Ovary (tissue), 10 donors: ENCODE measurements at regions of chr15 and their contacts with region 1.

Region 1: DNA sequence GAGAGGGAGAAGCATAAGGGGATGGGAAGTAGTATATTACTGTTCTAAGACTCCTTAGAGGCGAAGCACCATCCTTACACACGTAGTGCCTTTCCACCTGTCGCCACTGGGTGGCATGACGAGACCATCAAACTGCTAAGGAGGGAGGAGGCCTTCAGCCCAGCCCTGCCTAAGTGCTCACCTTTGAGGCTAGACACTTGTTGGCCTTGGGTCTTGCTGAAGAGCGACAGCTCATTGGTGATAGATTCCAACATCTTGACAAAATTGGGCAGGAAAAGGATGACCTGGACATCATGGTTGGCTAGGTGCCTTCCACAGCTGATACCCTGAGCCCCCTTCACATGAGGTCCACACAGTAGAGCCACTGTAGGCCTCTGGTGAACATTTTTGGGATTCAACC is 19.6 kb downstream of the CLK3 start:
- DNase-seq: peak in 3 of 5 donors; percentile 59 to 71 (median 61)
- H3K4me3 ChIP-seq: no peak overlapping the region
- H3K27ac ChIP-seq: no peak overlapping the region
- H3K4me1 ChIP-seq: no peaks in the 10 kb centered on the region
- H3K27me3 ChIP-seq: no peaks in the 10 kb centered on the region
- CTCF ChIP-seq: peak; percentile 26 to 75 (median 72)
- EP300 ChIP-seq: no peak
- POLR2A ChIP-seq: no peak

Region 2: DNA sequence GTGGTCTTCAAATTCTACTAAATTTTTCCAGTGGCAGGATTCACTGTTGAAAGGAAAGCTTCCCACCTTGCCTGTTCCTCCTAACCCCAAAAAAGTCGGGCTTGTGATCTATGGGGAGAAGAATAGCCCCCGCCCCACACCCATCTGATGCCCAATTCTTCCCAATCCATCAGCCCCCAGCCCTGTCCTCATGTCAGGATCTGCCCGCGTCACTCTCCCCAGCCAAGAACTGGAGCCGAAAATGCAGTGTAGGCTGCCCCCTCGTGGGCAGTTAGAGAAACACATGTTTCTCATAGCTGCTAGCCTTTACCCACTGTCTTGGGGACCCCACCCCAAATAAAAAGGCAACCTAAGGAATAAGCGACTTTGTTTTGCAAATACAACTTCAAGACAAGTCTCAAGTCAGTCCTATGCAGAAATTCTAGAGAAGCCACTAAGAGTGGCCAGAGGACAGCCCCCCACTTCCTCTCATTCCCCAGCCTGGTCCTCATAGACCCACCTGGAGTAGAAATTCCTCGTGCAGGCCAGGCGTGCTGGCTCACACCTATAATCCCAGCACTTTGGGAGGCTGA is 133.6 kb after region 1 on chr15:
- intact Hi-C with region 1: loop called (anchors 2 to 5 kb)
- DNase-seq: peak; percentile 50 to 69 (median 67)
- H3K4me3 ChIP-seq: no peak overlapping the region
- H3K27ac ChIP-seq: no peak overlapping the region
- H3K4me1 ChIP-seq: no peaks in the 10 kb centered on the region
- H3K27me3 ChIP-seq: no peaks in the 10 kb centered on the region
- CTCF ChIP-seq: peak; percentile 65 to 79 (median 78)
- EP300 ChIP-seq: no peak
- POLR2A ChIP-seq: no peak